ENCODE measurements at regions of chr19 and their contacts with region 1.

Region 1: DNA sequence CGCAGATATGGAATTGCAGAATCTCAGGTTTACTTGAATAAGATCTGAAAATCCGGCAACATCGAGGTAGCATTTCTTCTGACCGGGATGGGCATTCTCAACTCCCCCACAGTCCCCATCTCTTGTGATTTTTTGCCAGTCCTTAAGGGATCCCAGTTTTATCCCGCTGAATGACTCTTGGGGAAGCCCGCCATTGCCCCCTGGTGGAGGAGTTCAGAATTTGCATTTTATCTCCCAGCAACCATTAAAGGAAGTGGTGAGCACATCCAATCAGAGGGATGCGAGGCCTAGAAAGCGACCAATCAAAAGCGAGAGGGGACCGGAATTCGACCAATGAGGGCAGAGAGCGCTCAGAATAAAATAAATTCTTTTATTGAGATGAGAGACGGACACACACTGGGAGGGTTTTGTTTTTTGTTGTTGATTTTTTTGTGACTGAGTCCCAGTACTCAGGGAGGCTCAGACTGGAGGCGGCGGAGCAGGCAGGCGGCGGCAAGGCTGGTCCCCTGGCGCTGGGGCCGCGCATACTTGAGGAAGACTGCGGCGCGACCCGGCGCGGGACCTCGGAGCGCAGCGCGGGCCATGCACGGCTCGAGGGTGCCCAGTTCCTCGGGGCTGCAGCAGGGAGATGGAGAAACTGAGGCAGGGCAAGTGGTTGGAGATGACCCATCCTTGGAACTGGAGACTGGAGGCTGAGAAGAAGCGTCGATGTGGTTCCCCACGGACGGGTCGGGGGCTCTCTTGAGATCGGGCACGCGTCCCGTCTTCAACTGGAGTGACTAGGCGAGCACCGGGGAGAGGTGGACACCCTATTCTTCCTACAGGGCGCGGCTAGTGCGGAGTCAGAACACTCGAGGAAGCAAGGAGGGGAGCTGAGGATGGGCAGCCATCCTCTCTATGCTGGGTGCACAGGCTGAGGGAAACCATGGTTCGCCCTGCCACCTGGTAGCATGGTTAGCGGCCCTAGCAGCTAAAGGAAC is 4.0 kb upstream of the TTC9B start:
- DNase-seq: peak; percentile 73 to 84
- H3K4me3 ChIP-seq: no peak overlapping the region
- H3K27ac ChIP-seq: no peak overlapping the region
- H3K4me1 ChIP-seq: peaks cover 17% of the 10 kb centered on the region
- H3K27me3 ChIP-seq: no peaks in the 10 kb centered on the region
- CTCF ChIP-seq: peak; percentile 97

Region 2: GRCh38 chr19:39941615-39942365 is 280.4 kb before region 1 on chr19:
- CTCF ChIA-PET with region 1: no interaction called
- POLR2A ChIA-PET with region 1: no interaction called
- intact Hi-C with region 1: no loop called
- DNase-seq: peak in 1 of 2 experiments; percentile 56
- H3K4me3 ChIP-seq: no peak overlapping the region
- H3K27ac ChIP-seq: peak overlapping the region; percentile 19; the same call in 1 of the 2 replicates
- H3K4me1 ChIP-seq: peaks cover 32% of the 10 kb centered on the region
- H3K27me3 ChIP-seq: no peaks in the 10 kb centered on the region
- CTCF ChIP-seq: no peak

Region 3: GRCh38 chr19:40147693-40148347 is 74.3 kb before region 1 on chr19:
- CTCF ChIA-PET with region 1: interaction called, 14 read pairs
- POLR2A ChIA-PET with region 1: no interaction called
- intact Hi-C with region 1: loop called (anchors 2 kb)
- DNase-seq: peak; percentile 48 to 60
- H3K4me3 ChIP-seq: peak overlapping the region; percentile 52
- H3K27ac ChIP-seq: peak overlapping the region; percentile 4; the same call in 1 of the 2 replicates
- H3K4me1 ChIP-seq: peaks cover 4% of the 10 kb centered on the region; the same call in 1 of the 2 replicates
- H3K27me3 ChIP-seq: no peaks in the 10 kb centered on the region
- CTCF ChIP-seq: no peak

Region 4: GRCh38 chr19:40266119-40266518 is 44.0 kb after region 1 on chr19:
- CTCF ChIA-PET with region 1: no interaction called
- POLR2A ChIA-PET with region 1: no interaction called
- intact Hi-C with region 1: no loop called
- DNase-seq: no peak
- H3K4me3 ChIP-seq: no peak overlapping the region
- H3K27ac ChIP-seq: no peak overlapping the region
- H3K4me1 ChIP-seq: no peaks in the 10 kb centered on the region
- H3K27me3 ChIP-seq: no peaks in the 10 kb centered on the region
- CTCF ChIP-seq: no peak